ENCODE measurements at regions of chr4 and their contacts with region 1.

Region 1: DNA sequence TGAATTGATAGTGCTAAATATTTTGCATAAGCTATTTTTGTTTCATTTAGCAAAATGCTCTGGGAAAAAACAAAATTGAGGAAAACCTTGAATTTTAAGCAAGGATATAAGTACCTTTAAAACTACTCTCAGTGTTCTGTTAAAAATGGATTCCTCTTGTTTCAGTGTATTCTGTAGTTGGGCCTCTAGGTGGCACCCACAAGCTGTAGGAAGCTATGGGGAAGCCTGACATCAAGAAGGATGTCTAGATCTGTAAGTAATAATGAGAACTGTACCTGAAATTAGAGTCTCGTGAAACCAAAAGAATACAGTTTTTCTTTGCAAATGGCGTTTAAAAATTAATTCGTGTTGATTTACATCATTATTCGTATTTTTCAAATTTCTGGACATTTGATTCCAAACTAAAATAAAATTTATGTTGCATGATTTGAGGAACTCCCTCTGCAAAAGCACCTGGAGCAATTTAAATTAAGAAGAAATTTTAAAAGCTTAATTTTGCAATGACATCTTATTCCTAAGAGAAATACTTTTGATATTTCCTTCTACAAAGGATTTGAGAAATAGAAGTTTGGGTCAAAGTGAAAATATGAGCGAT is 51.2 kb downstream of the TMPRSS11E start:
- DNase-seq: peak in 1 of 2 donors; percentile 50
- ATAC-seq: peak; percentile 81
- H3K4me3 ChIP-seq: no peak overlapping the region
- H3K27ac ChIP-seq: no peak overlapping the region
- H3K4me1 ChIP-seq: no peaks in the 10 kb centered on the region
- H3K27me3 ChIP-seq: no peaks in the 10 kb centered on the region

Region 2: DNA sequence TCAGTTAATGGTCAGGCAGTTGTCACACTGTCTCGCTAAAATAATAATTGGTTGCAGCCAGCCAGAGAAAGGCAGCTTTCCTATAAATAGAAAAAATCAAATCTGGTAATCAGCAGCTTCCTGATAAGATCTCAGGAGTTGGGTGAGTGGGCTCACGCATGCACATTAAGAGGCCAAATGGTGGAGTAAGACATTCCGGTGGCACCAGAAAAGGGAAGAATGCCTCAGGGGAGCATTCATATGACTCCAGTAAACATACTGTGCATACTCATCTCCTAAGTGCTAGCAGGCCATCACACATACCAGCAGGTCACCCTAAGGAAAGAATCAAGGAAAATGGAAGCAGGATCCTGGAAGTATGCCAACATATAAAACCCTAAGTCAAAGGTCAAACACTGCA is 131.9 kb after region 1 on chr4:
- intact Hi-C with region 1: loop called (anchors 5 kb)
- DNase-seq: no peak
- ATAC-seq: no peak
- H3K4me3 ChIP-seq: no peak overlapping the region
- H3K27ac ChIP-seq: no peak overlapping the region
- H3K4me1 ChIP-seq: no peaks in the 10 kb centered on the region
- H3K27me3 ChIP-seq: no peaks in the 10 kb centered on the region

Region 3: DNA sequence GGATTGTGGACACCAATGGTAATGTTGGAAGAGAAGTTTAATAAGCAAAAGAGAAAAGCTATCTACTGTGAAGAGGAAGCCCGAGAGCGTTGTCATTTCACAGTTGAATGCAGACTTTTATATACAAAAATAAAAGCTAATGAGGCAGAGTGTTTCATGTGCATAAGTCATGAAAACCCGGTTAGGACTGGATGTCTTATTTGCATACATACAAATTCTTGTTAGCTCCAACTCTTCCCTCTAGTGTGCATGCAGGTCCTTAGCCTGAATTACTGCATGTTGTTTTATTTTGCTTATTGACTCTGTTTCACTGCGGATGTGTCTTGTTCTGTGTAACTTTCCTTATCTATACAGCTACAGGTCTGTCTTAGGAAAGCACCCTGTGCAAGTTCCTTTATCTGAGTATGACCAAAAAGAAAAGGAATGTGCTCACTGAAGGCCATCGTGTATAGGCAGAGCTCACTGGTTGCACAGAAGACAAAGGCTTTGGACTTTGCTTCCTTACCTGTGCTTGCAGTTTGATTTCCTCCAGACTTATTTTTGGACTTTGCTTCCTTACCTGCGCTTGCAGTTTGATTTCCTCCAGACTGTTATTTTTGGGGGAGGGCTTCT is 741.2 kb after region 1 on chr4:
- intact Hi-C with region 1: no loop called
- DNase-seq: no peak
- ATAC-seq: no peak
- H3K4me3 ChIP-seq: no peak overlapping the region
- H3K27ac ChIP-seq: no peak overlapping the region
- H3K4me1 ChIP-seq: no peaks in the 10 kb centered on the region
- H3K27me3 ChIP-seq: no peaks in the 10 kb centered on the region

Measured in aorta (tissue), 5 donors.